Activated naive CD4-positive, alpha-beta T cell treated with anti-CD3 and anti-CD28 coated beads for 36 hours (primary cell): ENCODE measurements at regions of chr5 and their contacts with region 1.

Region 1: DNA sequence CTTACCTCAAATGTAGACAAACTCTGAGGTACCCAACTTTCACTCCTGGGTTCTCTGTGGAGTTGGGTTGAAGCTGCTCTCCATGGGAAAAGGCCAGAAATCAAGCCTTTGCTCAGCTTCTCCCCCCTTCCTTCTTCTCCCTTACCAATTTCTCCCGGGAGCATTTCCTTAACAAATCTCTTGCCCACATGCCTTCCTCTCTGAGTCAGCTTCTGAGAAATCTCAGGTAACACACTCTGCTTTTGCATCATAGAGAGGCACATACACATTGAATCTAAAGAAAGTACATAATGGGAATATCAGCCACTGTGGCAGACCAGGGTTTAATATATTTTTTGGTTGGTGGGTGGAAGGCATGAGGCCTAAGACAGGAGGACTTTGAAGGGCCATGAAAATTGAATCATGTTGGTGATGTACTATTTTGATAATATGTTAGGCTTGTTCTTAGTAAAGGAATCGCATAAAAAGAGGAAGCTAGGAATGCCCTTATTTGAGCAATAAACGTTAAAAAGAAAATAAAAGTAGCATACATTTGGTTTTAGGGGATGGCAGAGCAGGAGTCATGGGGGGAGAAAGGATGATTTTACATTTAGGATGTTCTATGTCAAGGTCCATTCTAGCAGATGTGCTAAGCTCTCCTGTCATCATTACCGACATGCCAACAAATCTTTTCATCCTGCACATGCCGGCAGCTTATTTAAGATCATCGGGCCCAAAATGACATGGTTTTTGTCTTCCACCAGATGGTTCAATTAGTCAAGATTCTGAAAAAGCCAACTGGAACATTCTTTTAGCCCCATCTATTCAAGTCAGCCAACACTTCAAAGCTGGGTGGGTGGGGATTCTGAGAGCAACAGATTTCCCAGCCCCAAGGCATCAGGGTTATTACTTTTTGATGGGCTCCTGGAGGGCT is 199.5 kb upstream of the CLINT1 start:
- DNase-seq: no peak
- H3K4me3 Mint-ChIP-seq: no peak overlapping the region
- H3K27ac Mint-ChIP-seq: no peak overlapping the region
- H3K4me1 Mint-ChIP-seq: no peaks in the 10 kb centered on the region
- H3K27me3 Mint-ChIP-seq: peaks cover 9% of the 10 kb centered on the region

Region 2: DNA sequence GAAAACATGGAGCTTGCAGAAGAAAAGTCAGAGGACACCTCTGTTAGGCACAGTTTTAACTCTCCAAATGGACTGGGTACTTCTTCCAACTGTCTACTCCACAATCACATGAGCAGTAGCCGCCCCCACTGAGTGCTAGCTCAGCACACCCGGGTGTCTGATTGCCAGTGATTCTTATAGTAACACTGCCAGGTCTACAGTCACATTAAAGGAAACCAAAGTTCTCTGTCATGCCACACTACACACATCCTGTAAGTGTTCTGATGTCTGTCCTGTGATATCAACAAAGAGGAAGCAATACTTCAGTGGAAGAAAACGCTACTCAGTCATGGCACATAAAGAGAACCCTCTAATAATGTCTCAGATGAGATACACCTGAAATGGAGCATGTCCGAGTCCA is 949.5 kb before region 1 on chr5 and contains the start of gene HAVCR2:
- CTCF ChIA-PET with region 1: no interaction called
- intact Hi-C with region 1: no loop called
- DNase-seq: peak; percentile 87
- H3K4me3 Mint-ChIP-seq: peak within 1 kb of the TSS; percentile 65
- H3K27ac Mint-ChIP-seq: peak within 1 kb of the TSS; percentile 87
- H3K4me1 Mint-ChIP-seq: peaks cover 40% of the 10 kb centered on the region
- H3K27me3 Mint-ChIP-seq: no peaks in the 10 kb centered on the region
- total RNA-seq, gene HAVCR2: 10.2 to 10.4 TPM

Region 3: GRCh38 chr5:158074992-158075769 is 16.7 kb after region 1 on chr5:
- CTCF ChIA-PET with region 1: interaction called, 17 read pairs
- intact Hi-C with region 1: no loop called
- DNase-seq: peak; percentile 63
- H3K4me3 Mint-ChIP-seq: no peak overlapping the region
- H3K27ac Mint-ChIP-seq: no peak overlapping the region
- H3K4me1 Mint-ChIP-seq: peaks cover 3% of the 10 kb centered on the region
- H3K27me3 Mint-ChIP-seq: peaks cover 2% of the 10 kb centered on the region